ENCODE measurements at regions of chr7 and their contacts with region 1.

Region 1: GRCh38 chr7:135459951-135460567 is 49.8 kb downstream of the CNOT4 start:
- DNase-seq: no peak
- H3K4me3 ChIP-seq: no peak overlapping the region
- H3K4me3 Mint-ChIP-seq: peak overlapping the region in 3 of 7 donors; percentile 5 to 76 (median 18)
- H3K27ac ChIP-seq: no peak overlapping the region
- H3K27ac Mint-ChIP-seq: peak overlapping the region in 3 of 8 donors; percentile 20 to 68 (median 47)
- H3K4me1 ChIP-seq: peaks cover 12% of the 10 kb centered on the region
- H3K4me1 Mint-ChIP-seq: peaks cover 56 to 82% (median 79%) of the 10 kb centered on the region in 3 donors
- H3K27me3 ChIP-seq: no peaks in the 10 kb centered on the region
- H3K27me3 Mint-ChIP-seq: no peaks in the 10 kb centered on the region

Region 2: GRCh38 chr7:135501403-135501802 is 41.3 kb after region 1 on chr7:
- CTCF ChIA-PET with region 1: no interaction called
- POLR2A ChIA-PET with region 1: interaction called, 13 read pairs
- DNase-seq: no peak
- H3K4me3 ChIP-seq: no peak overlapping the region
- H3K4me3 Mint-ChIP-seq: peak overlapping the region in 1 of 7 donors; percentile 15
- H3K27ac ChIP-seq: no peak overlapping the region
- H3K27ac Mint-ChIP-seq: no peak overlapping the region
- H3K4me1 ChIP-seq: peaks cover 37% of the 10 kb centered on the region
- H3K4me1 Mint-ChIP-seq: peaks cover 54 to 81% (median 71%) of the 10 kb centered on the region in 3 donors
- H3K27me3 ChIP-seq: no peaks in the 10 kb centered on the region
- H3K27me3 Mint-ChIP-seq: no peaks in the 10 kb centered on the region